Stomach (tissue), 19 donors: ENCODE measurements at regions of chr21 and their contacts with region 1.

Region 1: GRCh38 chr21:42009831-42010523 is at the start of gene ZBTB21:
- DNase-seq: peak; percentile 99
- H3K4me3 ChIP-seq: peak within 1 kb of the TSS; percentile 71 to 94 (median 87)
- H3K27ac ChIP-seq: peak within 1 kb of the TSS; percentile 97 to 100 (median 98)
- H3K4me1 ChIP-seq: peaks cover 5 to 15% (median 14%) of the 10 kb centered on the region in 4 donors
- H3K27me3 ChIP-seq: no peaks in the 10 kb centered on the region
- CTCF ChIP-seq: no peak
- EP300 ChIP-seq: no peak
- POLR2A ChIP-seq: peak in 2 of 4 donors; percentile 62 to 72
- total RNA-seq, gene ZBTB21: 4.3 to 18.7 (median 6.7) TPM

Region 2: GRCh38 chr21:42062236-42063022 is 52.5 kb after region 1 on chr21:
- intact Hi-C with region 1: no loop called
- DNase-seq: peak; percentile 56 to 77
- H3K4me3 ChIP-seq: peak overlapping the region in 2 of 4 donors; percentile 0 to 11
- H3K27ac ChIP-seq: peak overlapping the region in 2 of 5 donors; percentile 43 to 63
- H3K4me1 ChIP-seq: peaks cover 30 to 50% (median 44%) of the 10 kb centered on the region in 4 donors
- H3K27me3 ChIP-seq: peaks cover 0 to 37% (median 4%) of the 10 kb centered on the region in 3 donors
- CTCF ChIP-seq: no peak
- EP300 ChIP-seq: no peak
- POLR2A ChIP-seq: no peak

Region 3: GRCh38 chr21:42107881-42108553 is 98.0 kb after region 1 on chr21:
- intact Hi-C with region 1: loop called (anchors 5 kb)
- DNase-seq: peak; percentile 39 to 67
- H3K4me3 ChIP-seq: no peak overlapping the region
- H3K27ac ChIP-seq: no peak overlapping the region
- H3K4me1 ChIP-seq: peaks cover 0 to 10% (median 4%) of the 10 kb centered on the region in 4 donors
- H3K27me3 ChIP-seq: peaks cover 0 to 35% (median 0%) of the 10 kb centered on the region in 3 donors
- CTCF ChIP-seq: peak in 5 of 7 experiments; percentile 40 to 74 (median 66)
- EP300 ChIP-seq: no peak
- POLR2A ChIP-seq: no peak